Aorta (tissue), 5 donors: ENCODE measurements at regions of chr3 and their contacts with region 1.

Region 1: GRCh38 chr3:62039586-62039985 is 333.8 kb downstream of the FEZF2 start:
- DNase-seq: no peak
- ATAC-seq: no peak
- H3K4me3 ChIP-seq: no peak overlapping the region
- H3K27ac ChIP-seq: no peak overlapping the region
- H3K4me1 ChIP-seq: no peaks in the 10 kb centered on the region
- H3K27me3 ChIP-seq: no peaks in the 10 kb centered on the region

Region 2: GRCh38 chr3:61847784-61848462 is 191.7 kb before region 1 on chr3:
- intact Hi-C with region 1: no loop called
- DNase-seq: peak in 1 of 2 donors; percentile 63
- ATAC-seq: peak; percentile 86
- H3K4me3 ChIP-seq: no peak overlapping the region
- H3K27ac ChIP-seq: peak overlapping the region; percentile 52 to 77
- H3K4me1 ChIP-seq: peaks cover 1 to 7% of the 10 kb centered on the region in 2 donors
- H3K27me3 ChIP-seq: no peaks in the 10 kb centered on the region

Region 3: GRCh38 chr3:61864886-61865285 is 174.7 kb before region 1 on chr3:
- intact Hi-C with region 1: loop called in 1 of 2 experiments (anchors 10 kb)
- DNase-seq: no peak
- ATAC-seq: no peak
- H3K4me3 ChIP-seq: no peak overlapping the region
- H3K27ac ChIP-seq: peak overlapping the region in 1 of 2 donors; percentile 38
- H3K4me1 ChIP-seq: peaks cover 6 to 7% of the 10 kb centered on the region in 2 donors
- H3K27me3 ChIP-seq: no peaks in the 10 kb centered on the region

Region 4: GRCh38 chr3:61882253-61882652 is 157.3 kb before region 1 on chr3:
- intact Hi-C with region 1: no loop called
- DNase-seq: no peak
- ATAC-seq: no peak
- H3K4me3 ChIP-seq: no peak overlapping the region
- H3K27ac ChIP-seq: no peak overlapping the region
- H3K4me1 ChIP-seq: peaks cover 0 to 3% of the 10 kb centered on the region in 2 donors
- H3K27me3 ChIP-seq: no peaks in the 10 kb centered on the region